Panc1 (cell line): ENCODE measurements at regions of chr12 and their contacts with region 1.

Region 1: GRCh38 chr12:118680356-118680963 is 300.9 kb upstream of the SRRM4 start:
- DNase-seq: no peak
- ATAC-seq: no peak
- H3K4me3 ChIP-seq: no peak overlapping the region
- H3K27ac ChIP-seq: no peak overlapping the region
- H3K4me1 ChIP-seq: no peaks in the 10 kb centered on the region
- H3K27me3 ChIP-seq: no peaks in the 10 kb centered on the region
- CTCF ChIP-seq: no peak

Region 2: GRCh38 chr12:118429688-118430383 is 250.6 kb before region 1 on chr12:
- CTCF ChIA-PET with region 1: no interaction called
- POLR2A ChIA-PET with region 1: interaction called, 12 read pairs
- in situ Hi-C with region 1: no loop called
- intact Hi-C with region 1: no loop called
- DNase-seq: no peak
- ATAC-seq: no peak
- H3K4me3 ChIP-seq: no peak overlapping the region
- H3K27ac ChIP-seq: no peak overlapping the region
- H3K4me1 ChIP-seq: no peaks in the 10 kb centered on the region
- H3K27me3 ChIP-seq: no peaks in the 10 kb centered on the region
- CTCF ChIP-seq: no peak

Region 3: DNA sequence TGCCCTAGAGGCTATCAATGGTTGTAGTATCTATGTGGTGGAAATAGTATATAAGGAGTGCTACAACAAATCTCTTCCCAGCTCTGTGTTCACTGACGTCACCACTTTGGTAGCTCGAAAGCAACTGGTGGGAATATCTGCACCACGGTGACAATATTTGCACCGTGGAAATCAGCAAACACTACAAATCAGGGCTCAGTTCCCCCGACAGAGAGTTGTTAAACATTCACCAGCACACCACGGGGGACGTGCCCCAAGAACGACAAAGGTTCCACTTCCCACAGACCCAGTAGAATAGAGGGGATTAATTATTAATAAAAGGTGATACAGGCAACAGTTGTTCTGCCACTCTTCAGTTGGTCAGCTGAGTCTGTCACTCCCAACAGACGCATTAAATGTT is 752.5 kb after region 1 on chr12:
- CTCF ChIA-PET with region 1: no interaction called
- POLR2A ChIA-PET with region 1: no interaction called
- in situ Hi-C with region 1: no loop called
- intact Hi-C with region 1: no loop called
- DNase-seq: no peak
- ATAC-seq: no peak
- H3K4me3 ChIP-seq: no peak overlapping the region
- H3K27ac ChIP-seq: no peak overlapping the region
- H3K4me1 ChIP-seq: no peaks in the 10 kb centered on the region
- H3K27me3 ChIP-seq: peaks cover 2% of the 10 kb centered on the region; the same call in 1 of the 2 replicates
- CTCF ChIP-seq: no peak